Colonic mucosa (tissue), 4 donors: ENCODE measurements at regions of chr2 and their contacts with region 1.

Region 1: GRCh38 chr2:44981136-44982108 is 27.8 kb downstream of the SIX2 start:
- DNase-seq: peak; percentile 73
- H3K4me3 ChIP-seq: no peak overlapping the region
- H3K27ac ChIP-seq: no peak overlapping the region
- H3K4me1 ChIP-seq: no peaks in the 10 kb centered on the region
- H3K27me3 ChIP-seq: no peaks in the 10 kb centered on the region
- CTCF ChIP-seq: peak; percentile 82

Region 2: DNA sequence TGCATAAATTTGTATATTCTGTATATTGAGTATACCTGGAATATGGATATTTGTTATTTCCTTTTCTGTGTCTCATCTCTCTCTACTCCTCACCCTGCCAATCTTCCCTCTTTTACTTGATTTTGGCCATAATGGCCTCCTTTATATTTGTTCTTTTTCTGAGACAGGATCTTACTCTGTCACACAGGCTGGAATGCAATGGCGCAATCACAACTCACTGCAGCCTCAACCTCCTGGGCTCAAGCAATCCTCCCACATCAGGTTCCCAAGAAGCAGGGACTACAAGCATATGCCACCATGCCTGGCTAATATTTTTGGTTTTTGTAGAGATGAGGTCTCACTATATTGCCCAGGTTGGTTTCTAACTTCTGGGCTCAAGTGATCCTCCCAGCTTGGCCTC is 650.6 kb before region 1 on chr2:
- intact Hi-C with region 1: no loop called
- DNase-seq: no peak
- H3K4me3 ChIP-seq: no peak overlapping the region
- H3K27ac ChIP-seq: no peak overlapping the region
- H3K4me1 ChIP-seq: no peaks in the 10 kb centered on the region
- H3K27me3 ChIP-seq: no peaks in the 10 kb centered on the region
- CTCF ChIP-seq: no peak

Region 3: GRCh38 chr2:44802777-44803424 is 178.5 kb before region 1 on chr2:
- intact Hi-C with region 1: no loop called
- DNase-seq: no peak
- H3K4me3 ChIP-seq: no peak overlapping the region
- H3K27ac ChIP-seq: no peak overlapping the region
- H3K4me1 ChIP-seq: peaks cover 3% of the 10 kb centered on the region
- H3K27me3 ChIP-seq: peaks cover 66% of the 10 kb centered on the region
- CTCF ChIP-seq: no peak

Region 4: GRCh38 chr2:44850016-44850415 is 131.4 kb before region 1 on chr2:
- intact Hi-C with region 1: no loop called
- DNase-seq: no peak
- H3K4me3 ChIP-seq: no peak overlapping the region
- H3K27ac ChIP-seq: no peak overlapping the region
- H3K4me1 ChIP-seq: no peaks in the 10 kb centered on the region
- H3K27me3 ChIP-seq: no peaks in the 10 kb centered on the region
- CTCF ChIP-seq: no peak

Region 5: DNA sequence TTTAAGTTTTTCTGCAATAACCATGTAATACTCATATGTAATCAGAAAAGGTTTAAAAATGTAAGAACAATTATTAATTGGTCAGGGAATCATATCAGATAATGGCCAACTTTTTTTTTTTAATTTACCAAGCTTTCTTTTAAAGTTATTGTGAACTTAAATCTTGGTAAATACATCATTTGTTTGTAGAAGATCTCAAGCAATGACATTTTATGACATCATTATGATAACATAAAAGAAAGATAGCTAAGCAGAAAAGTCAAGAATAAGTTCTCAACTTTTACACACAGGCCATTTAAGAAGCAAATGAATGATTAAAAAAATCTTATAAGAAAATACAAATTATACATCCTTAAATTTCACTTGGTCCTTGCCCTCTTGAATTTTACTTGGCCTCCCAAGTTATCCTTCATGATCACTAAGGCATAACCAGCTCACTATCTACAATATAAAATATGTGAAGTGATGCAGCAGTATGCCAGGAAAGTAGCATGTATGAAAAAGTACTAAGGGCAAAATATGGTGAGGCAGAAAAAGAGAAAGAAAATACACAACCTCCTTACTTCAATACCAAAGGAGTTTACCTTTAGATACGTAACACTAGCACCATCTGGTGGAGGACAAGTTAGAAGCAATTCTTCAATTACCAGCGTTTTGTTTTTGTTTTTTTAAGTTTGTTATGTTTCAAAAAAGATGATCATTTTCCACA is 513.0 kb after region 1 on chr2:
- intact Hi-C with region 1: loop called (anchors 2 kb)
- DNase-seq: peak; percentile 21
- H3K4me3 ChIP-seq: no peak overlapping the region
- H3K27ac ChIP-seq: no peak overlapping the region
- H3K4me1 ChIP-seq: no peaks in the 10 kb centered on the region
- H3K27me3 ChIP-seq: no peaks in the 10 kb centered on the region
- CTCF ChIP-seq: peak; percentile 70

Region 6: GRCh38 chr2:45578056-45578809 is 596.8 kb after region 1 on chr2:
- intact Hi-C with region 1: loop called (anchors 5 kb)
- DNase-seq: no peak
- H3K4me3 ChIP-seq: no peak overlapping the region
- H3K27ac ChIP-seq: no peak overlapping the region
- H3K4me1 ChIP-seq: no peaks in the 10 kb centered on the region
- H3K27me3 ChIP-seq: no peaks in the 10 kb centered on the region
- CTCF ChIP-seq: no peak